HCT116 (cell line): ENCODE measurements at regions of chr5 and their contacts with region 1.

Region 1: GRCh38 chr5:91383027-91383955 is at the start of gene ARRDC3:
- DNase-seq: peak; percentile 88
- ATAC-seq: peak; percentile 66
- H3K4me3 ChIP-seq: peak within 1 kb of the TSS; percentile 77 to 78
- H3K27ac ChIP-seq: peak within 1 kb of the TSS; percentile 93
- H3K4me1 ChIP-seq: peaks cover 14 to 25% of the 10 kb centered on the region in 2 experiments
- H3K27me3 ChIP-seq: no peaks in the 10 kb centered on the region
- CTCF ChIP-seq: no peak
- POLR2A ChIP-seq: peak; percentile 99
- RAD21 ChIP-seq: peak; percentile 22
- total RNA-seq, gene ARRDC3: 41.5 TPM

Region 2: GRCh38 chr5:90932052-90932699 is 451.1 kb before region 1 on chr5:
- CTCF ChIA-PET with region 1: interaction called, 21 read pairs
- POLR2A ChIA-PET with region 1: interaction called, 3 read pairs
- RAD21 ChIA-PET with region 1: no interaction called
- intact Hi-C with region 1: loop called (anchors 10 kb)
- DNase-seq: peak; percentile 44
- ATAC-seq: peak; percentile 67
- H3K4me3 ChIP-seq: no peak overlapping the region
- H3K27ac ChIP-seq: no peak overlapping the region
- H3K4me1 ChIP-seq: no peaks in the 10 kb centered on the region
- H3K27me3 ChIP-seq: no peaks in the 10 kb centered on the region
- CTCF ChIP-seq: peak; percentile 69 to 77 (median 74); a peak in 5 of 6 replicates
- POLR2A ChIP-seq: no peak
- RAD21 ChIP-seq: peak; percentile 84

Region 3: GRCh38 chr5:91219803-91220371 is 163.4 kb before region 1 on chr5:
- CTCF ChIA-PET with region 1: interaction called, 111 read pairs
- POLR2A ChIA-PET with region 1: interaction called, 16 read pairs
- RAD21 ChIA-PET with region 1: interaction called, 7 to 17 read pairs
- intact Hi-C with region 1: no loop called
- DNase-seq: peak; percentile 26
- ATAC-seq: peak; percentile 82
- H3K4me3 ChIP-seq: no peak overlapping the region
- H3K27ac ChIP-seq: no peak overlapping the region
- H3K4me1 ChIP-seq: no peaks in the 10 kb centered on the region
- H3K27me3 ChIP-seq: no peaks in the 10 kb centered on the region
- CTCF ChIP-seq: peak; percentile 50 to 64 (median 60); a peak in 5 of 6 replicates
- POLR2A ChIP-seq: no peak
- RAD21 ChIP-seq: peak; percentile 49

Region 4: GRCh38 chr5:91280362-91281269 is 102.7 kb before region 1 on chr5:
- CTCF ChIA-PET with region 1: interaction called, 11 read pairs
- POLR2A ChIA-PET with region 1: interaction called, 12 read pairs
- RAD21 ChIA-PET with region 1: interaction called, 3 read pairs
- intact Hi-C with region 1: loop called (anchors 1 kb)
- DNase-seq: peak; percentile 92
- ATAC-seq: peak; percentile 88
- H3K4me3 ChIP-seq: peak overlapping the region; percentile 40 to 53
- H3K27ac ChIP-seq: peak overlapping the region; percentile 84
- H3K4me1 ChIP-seq: peaks cover 28 to 74% of the 10 kb centered on the region in 2 experiments
- H3K27me3 ChIP-seq: no peaks in the 10 kb centered on the region
- CTCF ChIP-seq: no peak
- POLR2A ChIP-seq: no peak
- RAD21 ChIP-seq: no peak

Region 5: GRCh38 chr5:91361055-91361701 is 22.1 kb before region 1 on chr5:
- CTCF ChIA-PET with region 1: interaction called, 3 read pairs
- POLR2A ChIA-PET with region 1: interaction called, 14 read pairs
- RAD21 ChIA-PET with region 1: no interaction called
- intact Hi-C with region 1: no loop called
- DNase-seq: no peak
- ATAC-seq: no peak
- H3K4me3 ChIP-seq: no peak overlapping the region
- H3K27ac ChIP-seq: no peak overlapping the region
- H3K4me1 ChIP-seq: peaks cover 7 to 13% of the 10 kb centered on the region in 2 experiments; a peak in 2 of 4 replicates
- H3K27me3 ChIP-seq: no peaks in the 10 kb centered on the region
- CTCF ChIP-seq: no peak
- POLR2A ChIP-seq: no peak
- RAD21 ChIP-seq: no peak